ENCODE measurements at regions of chr2 and their contacts with region 1.

Region 1: DNA sequence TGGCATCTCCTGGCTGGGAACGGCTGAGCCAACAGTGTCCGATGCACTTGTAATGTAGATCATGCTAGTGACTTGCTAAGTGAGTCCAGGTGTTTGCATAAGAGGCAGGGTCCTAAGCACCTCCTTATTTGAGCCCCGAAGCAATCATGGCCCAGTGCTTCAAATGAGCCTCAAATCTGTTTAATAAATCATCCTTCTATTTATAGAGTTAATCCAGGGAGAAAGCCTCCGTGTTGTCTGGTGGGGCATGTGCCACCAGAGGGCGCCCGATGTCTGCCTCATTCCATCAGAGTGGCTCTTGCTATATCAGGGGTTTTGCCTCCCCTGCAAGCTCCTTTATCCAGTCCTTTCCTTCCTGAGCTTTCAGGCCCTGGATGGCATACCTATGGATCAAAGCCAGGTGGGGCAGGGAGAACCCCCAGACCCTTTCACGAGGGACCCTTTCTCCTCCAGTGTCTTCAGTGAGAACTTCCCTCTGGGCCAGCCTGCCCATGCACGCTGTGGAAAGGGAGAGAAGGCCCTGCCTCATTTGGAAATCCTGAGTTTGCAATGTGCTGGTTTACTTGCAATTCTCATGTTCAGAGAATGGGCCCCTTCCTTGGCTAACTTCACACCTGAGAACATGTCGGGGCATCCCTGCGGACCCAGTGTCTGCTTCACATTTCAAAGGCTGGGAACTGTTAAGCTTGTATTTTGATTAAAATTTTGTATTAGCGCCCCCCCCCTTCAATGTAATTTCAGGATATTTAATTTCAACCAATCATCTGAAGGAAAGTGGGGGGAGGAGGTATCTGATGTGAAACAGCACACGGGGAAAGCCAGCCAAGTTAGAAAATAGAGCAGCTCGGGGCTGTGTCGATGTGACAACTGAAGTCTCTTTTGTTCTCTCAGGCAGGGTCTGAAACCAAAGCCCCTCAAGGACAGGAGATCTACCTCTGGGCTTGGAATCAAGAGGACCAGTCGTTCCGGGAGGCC is 39.7 kb downstream of the RDH14 start:
- DNase-seq: peak; percentile 68
- H3K4me3 ChIP-seq: no peak overlapping the region
- H3K27ac ChIP-seq: no peak overlapping the region
- H3K27me3 ChIP-seq: no peaks in the 10 kb centered on the region
- CTCF ChIP-seq: peak; percentile 96

Region 2: DNA sequence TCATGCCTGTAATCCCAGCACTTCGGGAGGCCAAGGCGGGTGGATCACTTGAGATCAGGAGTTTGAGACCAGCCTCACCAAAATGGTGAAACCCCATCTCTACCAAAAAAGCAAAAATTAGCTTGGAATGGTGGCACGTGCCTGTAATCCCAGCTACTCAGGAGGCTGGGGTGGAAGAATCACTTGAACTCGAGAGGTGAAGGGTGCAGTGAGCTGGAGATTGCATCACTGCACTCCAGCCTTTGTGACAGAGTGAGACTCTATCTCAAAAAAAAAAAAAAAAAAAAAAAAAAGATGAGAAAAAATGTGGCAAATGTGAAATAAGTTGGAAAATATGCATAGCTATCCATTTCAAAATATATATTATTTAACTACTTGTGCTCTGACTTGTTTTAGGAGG is 577.3 kb before region 1 on chr2:
- CTCF ChIA-PET with region 1: no interaction called
- POLR2A ChIA-PET with region 1: interaction called, 13 read pairs
- DNase-seq: no peak
- H3K4me3 ChIP-seq: no peak overlapping the region
- H3K27ac ChIP-seq: no peak overlapping the region
- H3K27me3 ChIP-seq: no peaks in the 10 kb centered on the region
- CTCF ChIP-seq: no peak

Region 3: DNA sequence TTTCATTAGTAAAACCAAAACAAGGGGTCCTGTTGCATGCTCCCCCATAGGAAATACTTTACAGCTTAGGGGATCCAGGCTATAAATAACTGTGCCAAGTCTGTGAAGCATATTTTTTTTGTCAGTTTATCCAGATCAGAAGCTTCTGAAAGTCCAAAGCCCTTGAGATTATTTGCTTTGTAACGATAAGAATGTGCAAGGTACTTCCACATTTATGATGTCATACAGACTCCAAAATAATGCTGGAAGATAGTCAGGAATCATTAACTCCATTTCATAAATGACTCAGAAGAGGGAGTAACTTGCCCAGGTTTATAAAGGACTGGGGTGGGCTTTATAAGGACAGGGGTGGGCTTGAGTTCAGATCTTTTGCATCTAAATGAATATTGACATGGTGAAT is 10.5 kb after region 1 on chr2:
- CTCF ChIA-PET with region 1: interaction called, 11 read pairs
- POLR2A ChIA-PET with region 1: no interaction called
- DNase-seq: no peak
- H3K4me3 ChIP-seq: no peak overlapping the region
- H3K27ac ChIP-seq: no peak overlapping the region
- H3K27me3 ChIP-seq: no peaks in the 10 kb centered on the region
- CTCF ChIP-seq: no peak

Region 4: DNA sequence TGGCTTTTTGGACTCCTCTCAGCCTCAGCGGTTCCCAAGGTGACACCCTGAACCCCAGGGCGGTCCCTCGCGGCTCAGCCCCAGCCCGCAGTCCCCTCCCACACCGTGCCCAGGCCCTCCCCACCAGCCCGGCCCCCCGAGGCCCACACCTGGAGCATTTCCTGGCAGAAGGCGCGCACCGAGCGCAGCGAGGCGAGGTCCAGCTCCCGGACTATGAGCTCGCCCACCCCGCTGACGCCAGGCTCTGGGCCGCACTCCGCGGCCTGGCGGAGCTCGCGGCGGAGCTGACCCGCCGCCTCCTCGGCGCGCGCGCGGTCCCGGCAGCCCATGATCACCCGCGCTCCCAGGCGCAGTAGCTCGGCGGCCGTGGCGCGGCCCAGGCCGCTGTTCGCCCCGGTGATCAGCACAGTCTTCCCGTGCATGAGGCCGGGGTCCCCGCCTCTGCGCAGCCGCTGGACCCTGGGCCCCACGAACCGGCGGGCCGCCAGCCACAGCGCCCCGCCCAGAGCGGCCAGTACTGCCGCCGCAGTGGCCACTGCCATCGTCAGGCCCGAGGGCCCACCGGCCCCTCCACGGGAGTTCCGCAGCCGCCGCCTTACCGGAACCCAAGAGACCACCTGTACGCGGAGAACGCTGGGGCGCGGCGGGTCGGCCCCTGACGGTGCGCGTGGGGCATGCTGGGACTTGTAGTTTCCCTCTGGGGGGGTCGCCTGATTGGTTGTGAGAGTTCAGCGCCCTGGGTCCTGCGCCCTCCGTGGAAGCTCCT is 39.5 kb after region 1 on chr2 and contains the start of gene RDH14:
- CTCF ChIA-PET with region 1: interaction called, 21 read pairs
- POLR2A ChIA-PET with region 1: interaction called, 3 read pairs
- DNase-seq: peak; percentile 69
- H3K4me3 ChIP-seq: peak within 1 kb of the TSS; percentile 73
- H3K27ac ChIP-seq: peak within 1 kb of the TSS; percentile 63
- H3K27me3 ChIP-seq: no peaks in the 10 kb centered on the region
- CTCF ChIP-seq: no peak
- polyA plus RNA-seq, gene RDH14: 19.5 and 25.1 TPM in 2 replicates

Region 5: GRCh38 chr2:18741895-18742732 is 221.4 kb after region 1 on chr2:
- CTCF ChIA-PET with region 1: interaction called, 85 read pairs
- POLR2A ChIA-PET with region 1: interaction called, 13 read pairs
- DNase-seq: peak; percentile 90
- H3K4me3 ChIP-seq: no peak overlapping the region
- H3K27ac ChIP-seq: no peak overlapping the region
- H3K27me3 ChIP-seq: no peaks in the 10 kb centered on the region
- CTCF ChIP-seq: peak; percentile 38

Region 6: GRCh38 chr2:18792226-18792629 is 271.5 kb after region 1 on chr2:
- CTCF ChIA-PET with region 1: interaction called, 10 read pairs
- POLR2A ChIA-PET with region 1: interaction called, 5 read pairs
- DNase-seq: no peak
- H3K4me3 ChIP-seq: no peak overlapping the region
- H3K27ac ChIP-seq: no peak overlapping the region
- H3K27me3 ChIP-seq: no peaks in the 10 kb centered on the region
- CTCF ChIP-seq: no peak